Heart right ventricle (tissue), 16 donors: ENCODE measurements at regions of chr13 and their contacts with region 1.

Region 1: GRCh38 chr13:98142380-98143156 is at the start of gene FARP1:
- DNase-seq: peak; percentile 73 to 79
- ATAC-seq: peak; percentile 92 to 97 (median 94)
- H3K4me3 ChIP-seq: peak within 1 kb of the TSS; percentile 60 to 94 (median 72)
- H3K27ac ChIP-seq: peak within 1 kb of the TSS; percentile 35 to 89 (median 70)
- H3K4me1 ChIP-seq: peaks cover 3 to 28% (median 20%) of the 10 kb centered on the region in 9 donors
- H3K27me3 ChIP-seq: peaks cover 0 to 47% (median 0%) of the 10 kb centered on the region in 7 donors
- CTCF ChIP-seq: peak in 7 of 9 donors; percentile 8 to 70 (median 58)
- total RNA-seq, gene FARP1: 13.4 to 72.9 (median 24.7) TPM

Region 2: GRCh38 chr13:98315466-98315865 is 172.9 kb after region 1 on chr13:
- intact Hi-C with region 1: loop called in 1 of 10 experiments (anchors 10 kb)
- DNase-seq: no peak
- ATAC-seq: peak in 6 of 8 donors; percentile 44 to 73 (median 65)
- H3K4me3 ChIP-seq: no peak overlapping the region
- H3K27ac ChIP-seq: peak overlapping the region in 2 of 10 donors; percentile 47 to 51
- H3K4me1 ChIP-seq: peaks cover 0 to 37% (median 16%) of the 10 kb centered on the region in 9 donors
- H3K27me3 ChIP-seq: no peaks in the 10 kb centered on the region
- CTCF ChIP-seq: no peak

Region 3: GRCh38 chr13:98397221-98397620 is 254.7 kb after region 1 on chr13:
- intact Hi-C with region 1: loop called in 5 of 10 experiments (anchors 5 to 10 kb)
- DNase-seq: no peak
- ATAC-seq: peak in 5 of 8 donors; percentile 44 to 73 (median 63)
- H3K4me3 ChIP-seq: no peak overlapping the region
- H3K27ac ChIP-seq: no peak overlapping the region
- H3K4me1 ChIP-seq: no peaks in the 10 kb centered on the region
- H3K27me3 ChIP-seq: no peaks in the 10 kb centered on the region
- CTCF ChIP-seq: peak in 6 of 9 donors; percentile 22 to 60 (median 42)

Region 4: GRCh38 chr13:98653463-98653985 is 511.0 kb after region 1 on chr13:
- intact Hi-C with region 1: loop called in 3 of 10 experiments (anchors 10 kb)
- DNase-seq: peak; percentile 64 to 68
- ATAC-seq: peak; percentile 78 to 90 (median 87)
- H3K4me3 ChIP-seq: no peak overlapping the region
- H3K27ac ChIP-seq: no peak overlapping the region
- H3K4me1 ChIP-seq: peaks cover 0 to 19% (median 0%) of the 10 kb centered on the region in 9 donors
- H3K27me3 ChIP-seq: peaks cover 0 to 3% (median 0%) of the 10 kb centered on the region in 7 donors
- CTCF ChIP-seq: peak; percentile 86 to 93 (median 89)

Region 5: DNA sequence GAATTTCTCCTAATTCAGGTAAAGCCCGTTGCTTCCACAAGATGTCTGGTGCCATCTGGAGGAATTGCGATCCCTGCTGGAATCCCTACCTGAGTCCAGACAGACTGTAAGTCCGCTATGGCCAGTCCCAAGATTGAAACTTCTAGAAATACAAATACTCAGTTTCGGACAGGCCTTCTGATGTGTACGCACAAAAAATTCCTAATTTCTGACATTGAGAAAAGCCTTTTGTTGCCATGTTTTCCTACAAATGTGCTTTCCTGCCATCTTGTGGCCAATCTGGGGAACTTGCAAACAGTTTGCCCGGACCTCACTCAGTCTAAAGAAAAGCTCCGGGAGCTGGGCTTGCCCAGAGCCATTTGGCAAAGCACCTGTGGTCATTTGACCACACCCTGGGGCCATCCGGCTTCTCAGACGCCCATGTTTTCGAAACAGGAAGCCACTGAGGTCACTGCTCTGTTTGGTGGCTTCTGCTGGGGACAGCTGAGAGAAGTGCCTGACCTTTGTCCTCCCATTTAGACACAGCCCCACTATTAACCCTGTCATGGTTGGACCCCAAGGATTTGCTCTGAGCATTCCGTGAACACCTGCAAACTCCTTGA is 530.5 kb after region 1 on chr13:
- intact Hi-C with region 1: loop called in 3 of 10 experiments (anchors 5 to 10 kb)
- DNase-seq: peak; percentile 45 to 72
- ATAC-seq: peak; percentile 89 to 96 (median 92)
- H3K4me3 ChIP-seq: peak overlapping the region in 1 of 10 donors; percentile 9
- H3K27ac ChIP-seq: peak overlapping the region in 2 of 10 donors; percentile 20 to 29
- H3K4me1 ChIP-seq: peaks cover 0 to 18% (median 11%) of the 10 kb centered on the region in 9 donors
- H3K27me3 ChIP-seq: no peaks in the 10 kb centered on the region
- CTCF ChIP-seq: peak; percentile 75 to 95 (median 88)